ENCODE measurements at regions of chr18 and their contacts with region 1.

Region 1: GRCh38 chr18:10032331-10033015 is 118.7 kb downstream of the VAPA start:
- DNase-seq: no peak
- H3K4me3 Mint-ChIP-seq: peak overlapping the region; percentile 26
- H3K27ac Mint-ChIP-seq: no peak overlapping the region
- H3K4me1 Mint-ChIP-seq: peaks cover 5% of the 10 kb centered on the region
- H3K27me3 Mint-ChIP-seq: peaks cover 14% of the 10 kb centered on the region

Region 2: GRCh38 chr18:10057894-10058791 is 25.7 kb after region 1 on chr18:
- CTCF ChIA-PET with region 1: no interaction called
- intact Hi-C with region 1: no loop called
- DNase-seq: peak; percentile 5
- H3K4me3 Mint-ChIP-seq: no peak overlapping the region
- H3K27ac Mint-ChIP-seq: no peak overlapping the region
- H3K4me1 Mint-ChIP-seq: no peaks in the 10 kb centered on the region
- H3K27me3 Mint-ChIP-seq: peaks cover 8% of the 10 kb centered on the region

Region 3: GRCh38 chr18:10525371-10526210 is 493.1 kb after region 1 on chr18 and contains the start of gene NAPG:
- CTCF ChIA-PET with region 1: no interaction called
- intact Hi-C with region 1: loop called (anchors 10 kb)
- DNase-seq: peak; percentile 88
- H3K4me3 Mint-ChIP-seq: peak within 1 kb of the TSS; percentile 95
- H3K27ac Mint-ChIP-seq: peak within 1 kb of the TSS; percentile 89
- H3K4me1 Mint-ChIP-seq: peaks cover 45% of the 10 kb centered on the region
- H3K27me3 Mint-ChIP-seq: no peaks in the 10 kb centered on the region
- total RNA-seq, gene NAPG: 20.2 to 21.0 TPM

Measured in activated naive CD4-positive, alpha-beta T cell treated with anti-CD3 and anti-CD28 coated beads for 36 hours (primary cell).